GM18951 (cell line): ENCODE measurements at regions of chr18 and their contacts with region 1.

Region 1: DNA sequence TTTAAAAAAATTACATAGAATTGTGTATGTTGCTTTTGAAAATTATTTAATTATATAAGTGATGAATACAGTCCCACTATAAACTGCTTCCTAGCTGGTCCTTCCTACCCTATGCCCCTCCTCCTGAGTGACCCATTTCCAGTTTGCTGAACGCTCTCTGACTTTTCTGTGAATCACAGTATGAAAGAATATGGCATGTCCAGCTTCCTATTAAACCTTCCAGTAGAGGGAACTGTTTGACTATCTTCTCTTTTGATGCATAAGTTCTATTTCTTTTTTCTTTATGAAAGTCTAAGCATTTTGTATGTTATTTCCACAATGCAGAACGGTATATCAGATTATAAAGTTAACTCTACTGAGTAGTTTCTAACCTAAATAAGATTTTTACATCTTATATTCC is 41.3 kb downstream of the PSMG2 start:
- POLR2A ChIP-seq: no peak

Region 2: DNA sequence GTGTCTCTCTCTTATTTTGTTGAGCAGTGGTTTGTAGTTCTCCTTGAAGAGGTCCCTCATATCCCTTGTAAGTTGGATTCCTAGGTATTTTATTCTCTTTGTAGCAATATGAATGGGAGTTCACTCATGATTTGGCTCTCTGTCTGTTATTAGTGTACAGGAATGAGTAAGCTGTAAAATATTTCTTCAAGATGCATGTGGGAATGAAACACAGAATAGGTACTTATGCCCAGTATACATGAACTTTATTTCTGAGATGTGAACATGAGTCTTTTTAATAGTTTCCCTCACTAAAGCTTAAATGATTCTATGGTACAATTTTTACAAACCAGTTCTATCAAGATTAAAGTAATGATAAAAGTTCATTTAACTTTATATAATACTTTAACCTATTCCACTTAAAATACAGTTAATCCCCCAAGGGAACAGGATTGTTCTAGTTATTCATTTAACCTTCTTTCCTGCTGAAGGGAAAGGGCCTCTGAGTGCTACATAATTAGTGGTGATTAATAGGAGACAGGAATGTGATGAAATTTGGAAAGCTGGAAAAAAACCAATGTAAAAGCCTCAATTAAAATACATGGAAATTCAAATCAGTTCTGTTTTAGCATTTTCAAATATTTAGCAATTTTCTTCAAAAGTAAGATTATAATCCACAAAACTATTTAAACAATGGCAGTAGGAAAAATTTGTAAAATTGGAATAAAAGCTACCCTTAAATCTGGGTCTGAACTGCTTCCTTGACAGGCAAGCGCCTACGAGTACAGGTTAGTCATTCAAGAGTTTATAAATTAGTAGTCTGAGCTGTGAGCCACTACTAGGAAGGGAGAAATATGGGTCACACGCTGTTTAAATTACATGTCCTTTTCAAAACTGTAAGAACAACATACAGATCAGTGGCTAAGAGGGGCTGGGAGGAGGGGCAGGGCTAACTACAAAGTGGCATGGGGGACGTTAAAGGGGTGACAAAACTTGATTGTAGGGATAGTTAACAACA is 115.1 kb before region 1 on chr18:
- in situ Hi-C with region 1: no loop called
- POLR2A ChIP-seq: no peak

Region 3: GRCh38 chr18:12934454-12935071 is 190.5 kb after region 1 on chr18:
- in situ Hi-C with region 1: loop called (anchors 10 kb)
- POLR2A ChIP-seq: no peak